ENCODE measurements at regions of chr7 and their contacts with region 1.

Region 1: GRCh38 chr7:22559829-22560489 is 60.0 kb upstream of the STEAP1B start:
- DNase-seq: peak; percentile 91
- H3K4me3 Mint-ChIP-seq: no peak overlapping the region
- H3K27ac Mint-ChIP-seq: no peak overlapping the region
- H3K4me1 Mint-ChIP-seq: peaks cover 37% of the 10 kb centered on the region
- H3K27me3 Mint-ChIP-seq: peaks cover 10% of the 10 kb centered on the region

Region 2: GRCh38 chr7:22319424-22320403 is 240.2 kb before region 1 on chr7:
- intact Hi-C with region 1: no loop called
- DNase-seq: no peak
- H3K4me3 Mint-ChIP-seq: no peak overlapping the region
- H3K27ac Mint-ChIP-seq: no peak overlapping the region
- H3K4me1 Mint-ChIP-seq: no peaks in the 10 kb centered on the region
- H3K27me3 Mint-ChIP-seq: peaks cover 7% of the 10 kb centered on the region

Region 3: GRCh38 chr7:22584179-22584578 is 24.2 kb after region 1 on chr7:
- intact Hi-C with region 1: loop called (anchors 2 kb)
- DNase-seq: no peak
- H3K4me3 Mint-ChIP-seq: no peak overlapping the region
- H3K27ac Mint-ChIP-seq: no peak overlapping the region
- H3K4me1 Mint-ChIP-seq: peaks cover 8% of the 10 kb centered on the region
- H3K27me3 Mint-ChIP-seq: peaks cover 40% of the 10 kb centered on the region

Region 4: GRCh38 chr7:22660732-22661131 is 100.8 kb after region 1 on chr7:
- intact Hi-C with region 1: loop called (anchors 2 kb)
- DNase-seq: no peak
- H3K4me3 Mint-ChIP-seq: no peak overlapping the region
- H3K27ac Mint-ChIP-seq: no peak overlapping the region
- H3K4me1 Mint-ChIP-seq: peaks cover 22% of the 10 kb centered on the region
- H3K27me3 Mint-ChIP-seq: peaks cover 39% of the 10 kb centered on the region

Region 5: DNA sequence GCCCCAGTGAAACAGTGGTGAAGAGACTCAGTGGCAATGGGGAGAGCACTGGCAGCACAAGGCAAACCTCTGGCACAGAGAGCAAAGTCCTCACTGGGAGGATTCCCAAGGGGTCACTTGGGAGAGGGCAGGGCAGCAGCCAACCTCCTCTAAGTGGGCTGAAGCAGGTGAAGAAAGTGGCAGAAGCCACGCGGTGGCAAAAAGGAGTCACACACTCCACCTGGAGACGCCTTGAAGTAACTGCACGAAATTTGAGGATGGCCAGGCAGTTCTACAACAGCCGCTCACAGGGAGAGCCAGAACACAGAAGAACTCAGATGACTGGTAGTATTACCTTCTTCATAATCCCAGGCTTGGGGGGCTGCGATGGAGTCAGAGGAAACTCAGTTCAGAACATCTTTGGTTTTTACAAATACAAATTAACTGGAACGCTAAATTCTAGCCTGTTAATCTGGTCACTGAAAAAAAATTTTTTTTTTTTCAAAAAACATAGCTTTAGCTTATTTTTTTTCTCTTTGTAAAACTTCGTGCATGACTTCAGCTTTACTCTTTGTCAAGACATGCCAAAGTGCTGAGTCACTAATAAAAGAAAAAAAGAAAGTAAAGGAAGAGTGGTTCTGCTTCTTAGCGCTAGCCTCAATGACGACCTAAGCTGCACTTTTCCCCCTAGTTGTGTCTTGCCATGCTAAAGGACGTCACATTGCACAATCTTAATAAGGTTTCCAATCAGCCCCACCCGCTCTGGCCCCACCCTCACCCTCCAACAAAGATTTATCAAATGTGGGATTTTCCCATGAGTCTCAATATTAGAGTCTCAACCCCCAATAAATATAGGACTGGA is 166.6 kb after region 1 on chr7:
- intact Hi-C with region 1: loop called (anchors 1 kb)
- DNase-seq: peak; percentile 87
- H3K4me3 Mint-ChIP-seq: peak overlapping the region; percentile 68
- H3K27ac Mint-ChIP-seq: peak overlapping the region; percentile 19
- H3K4me1 Mint-ChIP-seq: peaks cover 32% of the 10 kb centered on the region
- H3K27me3 Mint-ChIP-seq: peaks cover 30% of the 10 kb centered on the region

Region 6: DNA sequence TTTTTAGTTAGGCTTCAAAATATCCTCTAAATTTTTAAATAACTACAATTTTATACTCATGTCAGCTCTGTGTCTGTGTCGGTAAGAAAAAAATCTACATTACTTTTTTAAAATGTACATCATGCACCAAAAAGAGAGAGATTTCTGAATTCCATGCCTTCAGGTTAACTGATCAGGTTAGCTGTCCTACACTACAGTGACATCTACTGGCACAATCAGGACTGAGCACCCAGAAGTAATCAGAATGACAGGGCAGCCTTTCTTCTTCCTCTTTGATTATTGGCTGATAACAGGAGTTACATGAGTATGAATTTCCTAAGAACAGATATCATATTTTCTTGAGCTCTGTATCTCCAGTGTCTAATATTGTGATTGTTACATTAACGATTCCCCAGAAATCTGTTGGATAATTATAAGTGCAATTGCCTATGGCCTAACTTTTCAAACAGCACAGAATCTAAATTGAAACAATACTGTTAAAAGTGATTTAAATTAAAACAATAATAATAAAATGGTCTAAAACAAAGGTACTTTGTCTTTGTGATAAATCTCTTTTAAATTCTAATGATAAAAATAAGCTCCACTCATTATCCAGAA is 495.7 kb after region 1 on chr7:
- intact Hi-C with region 1: loop called (anchors 1 kb)
- DNase-seq: peak; percentile 90
- H3K4me3 Mint-ChIP-seq: no peak overlapping the region
- H3K27ac Mint-ChIP-seq: no peak overlapping the region
- H3K4me1 Mint-ChIP-seq: peaks cover 6% of the 10 kb centered on the region
- H3K27me3 Mint-ChIP-seq: peaks cover 11% of the 10 kb centered on the region

Measured in activated CD4-positive, alpha-beta T cell treated with anti-CD3 and anti-CD28 coated beads, Interleukin-2, amount 10 ng/mL, durations not matched to agents 24 days and 14 days (primary cell).